Left cardiac atrium (tissue), 4 donors: ENCODE measurements at regions of chr11 and their contacts with region 1.

Region 1: DNA sequence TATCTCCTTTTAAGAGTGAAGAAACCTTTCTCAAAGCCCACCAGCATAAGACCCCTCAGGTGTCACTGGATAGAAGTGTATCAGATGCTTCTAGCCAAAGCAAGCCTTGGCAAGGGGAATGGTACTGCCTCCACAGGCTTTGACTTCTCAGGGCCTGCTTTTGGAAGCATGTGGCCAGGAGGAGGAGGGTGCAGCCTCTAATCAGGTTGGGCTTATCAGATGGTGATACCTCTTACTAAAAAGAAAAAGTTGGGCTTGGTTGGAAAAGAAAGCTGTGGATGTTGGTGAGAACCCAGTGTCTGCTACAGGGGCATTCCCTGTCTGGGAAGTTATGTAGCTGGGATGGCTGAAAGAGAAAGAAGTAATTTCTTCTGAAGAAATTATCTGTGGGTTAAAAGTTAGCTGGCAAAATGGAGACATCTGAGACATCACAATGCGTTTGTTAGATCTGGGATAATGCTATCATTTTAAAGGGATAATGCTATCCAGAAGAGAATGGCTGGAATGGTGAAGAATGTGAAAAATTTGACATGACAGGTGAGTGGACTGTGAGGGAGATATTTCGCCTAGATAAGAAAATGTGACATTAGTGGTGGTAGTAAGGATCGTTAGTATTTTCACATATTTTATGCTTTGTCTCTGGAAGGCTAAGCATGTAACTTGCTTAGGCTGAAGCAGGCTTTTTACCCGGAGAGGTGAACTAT is 7.2 kb downstream of the APLP2 start:
- DNase-seq: no peak
- ATAC-seq: no peak

Region 2: GRCh38 chr11:130022798-130023583 is 53.9 kb before region 1 on chr11:
- intact Hi-C with region 1: no loop called
- DNase-seq: no peak
- ATAC-seq: no peak

Region 3: GRCh38 chr11:130168105-130168504 is 91.2 kb after region 1 on chr11:
- intact Hi-C with region 1: no loop called
- DNase-seq: no peak
- ATAC-seq: no peak

Region 4: DNA sequence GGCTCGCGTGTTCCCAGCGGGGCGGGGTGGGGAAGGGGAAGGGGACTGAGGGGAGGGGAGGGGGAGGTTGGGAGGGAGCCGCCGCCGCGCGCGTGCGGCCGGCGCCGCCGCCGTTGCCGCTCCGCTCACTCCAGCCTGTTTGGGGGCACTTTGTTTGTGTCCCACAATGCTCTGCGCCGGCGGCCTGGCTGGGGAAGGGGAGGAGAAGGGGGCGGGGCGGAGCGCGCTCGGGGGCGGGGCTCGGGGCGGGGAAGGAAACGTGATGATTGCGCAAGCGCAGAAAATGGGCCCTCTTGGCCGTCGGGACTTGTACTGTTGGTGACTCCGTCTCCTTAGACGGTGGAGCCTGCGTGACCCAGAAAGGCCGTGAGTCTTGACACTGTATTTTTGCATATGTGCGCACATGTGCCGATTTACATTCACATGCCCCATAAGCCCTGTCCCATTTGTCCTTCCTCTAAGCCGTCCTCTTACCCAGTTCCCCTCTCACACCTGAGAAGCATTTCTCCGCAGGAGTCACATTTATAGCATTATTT is 237.9 kb after region 1 on chr11 and contains the start of gene ZBTB44:
- intact Hi-C with region 1: loop called in 1 of 2 experiments (anchors 5 kb)
- DNase-seq: peak; percentile 94
- ATAC-seq: peak; percentile 97 to 98
- total RNA-seq, gene ZBTB44: 37.5 to 40.7 TPM